H1 (cell line): ENCODE measurements at regions of chr1 and their contacts with region 1.

Region 1: GRCh38 chr1:84753516-84754385 is 63.5 kb upstream of the SSX2IP start:
- DNase-seq: peak; percentile 59 to 85
- H3K4me3 ChIP-seq: no peak overlapping the region
- H3K27ac ChIP-seq: no peak overlapping the region
- H3K4me1 ChIP-seq: peaks cover 0 to 12% (median 2%) of the 10 kb centered on the region in 4 experiments; a peak in 4 of 7 replicates
- H3K27me3 ChIP-seq: no peaks in the 10 kb centered on the region
- CTCF ChIP-seq: peak; percentile 95 to 96 (median 96)
- EP300 ChIP-seq: no peak
- POLR2A ChIP-seq: no peak
- RAD21 ChIP-seq: peak; percentile 99 to 100

Region 2: GRCh38 chr1:84603941-84604830 is 149.6 kb before region 1 on chr1:
- CTCF ChIA-PET with region 1: interaction called, 12 read pairs
- POLR2A ChIA-PET with region 1: no interaction called
- DNase-seq: peak; percentile 49 to 60
- H3K4me3 ChIP-seq: no peak overlapping the region
- H3K27ac ChIP-seq: no peak overlapping the region
- H3K4me1 ChIP-seq: no peaks in the 10 kb centered on the region
- H3K27me3 ChIP-seq: no peaks in the 10 kb centered on the region
- CTCF ChIP-seq: peak; percentile 60 to 91 (median 87)
- EP300 ChIP-seq: no peak
- POLR2A ChIP-seq: no peak
- RAD21 ChIP-seq: peak; percentile 94 to 97

Region 3: DNA sequence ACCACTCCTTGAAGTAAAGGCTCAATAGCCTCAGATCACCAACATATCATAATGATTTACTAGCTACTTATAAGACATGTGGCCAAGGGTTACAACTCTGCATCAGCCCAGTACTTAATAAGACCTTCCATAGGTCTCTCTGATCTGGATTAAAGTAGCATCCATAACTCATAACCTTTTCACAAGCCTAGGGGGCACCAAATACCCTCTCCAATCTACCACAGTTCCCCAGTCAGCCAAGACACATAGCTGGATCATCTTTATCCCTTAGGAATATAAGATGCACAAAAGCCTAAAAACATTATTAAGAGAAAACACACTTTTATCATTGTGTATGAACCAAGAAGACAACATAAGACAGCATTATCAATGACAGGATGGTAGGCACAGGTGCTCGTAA is 85.6 kb before region 1 on chr1:
- CTCF ChIA-PET with region 1: interaction called, 37 read pairs
- POLR2A ChIA-PET with region 1: no interaction called
- DNase-seq: no peak
- H3K4me3 ChIP-seq: no peak overlapping the region
- H3K27ac ChIP-seq: no peak overlapping the region
- H3K4me1 ChIP-seq: peaks cover 0 to 2% (median 0%) of the 10 kb centered on the region in 4 experiments; a peak in 1 of 7 replicates
- H3K27me3 ChIP-seq: peaks cover 0 to 1% (median 0%) of the 10 kb centered on the region in 4 experiments; a peak in 1 of 7 replicates
- CTCF ChIP-seq: peak in 2 of 3 experiments; percentile 44 to 47; a peak in 2 of 4 replicates
- EP300 ChIP-seq: no peak
- POLR2A ChIP-seq: no peak
- RAD21 ChIP-seq: peak; percentile 64 to 76

Region 4: DNA sequence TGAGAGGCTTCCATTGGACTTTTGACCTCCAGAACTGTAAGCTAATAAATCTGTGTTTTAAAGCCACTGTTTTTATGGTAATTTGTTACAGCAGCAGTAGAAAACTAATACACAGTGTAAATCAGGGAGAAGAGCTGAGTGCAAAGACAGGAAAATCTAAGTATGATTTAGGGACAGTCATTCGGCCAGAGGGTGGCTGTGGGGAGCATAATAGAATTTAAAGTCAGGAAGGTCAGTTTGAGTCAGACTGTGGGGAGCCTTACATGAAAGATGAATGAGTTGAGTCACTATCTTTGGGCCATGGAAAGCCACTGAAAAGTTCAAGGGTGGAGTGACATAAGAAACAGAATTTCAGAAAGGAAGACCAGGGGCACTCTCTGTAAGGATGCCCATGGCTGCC is 11.1 kb before region 1 on chr1:
- CTCF ChIA-PET with region 1: interaction called, 34 read pairs
- POLR2A ChIA-PET with region 1: interaction called, 3 read pairs
- DNase-seq: no peak
- H3K4me3 ChIP-seq: no peak overlapping the region
- H3K27ac ChIP-seq: no peak overlapping the region
- H3K4me1 ChIP-seq: peaks cover 0 to 14% (median 8%) of the 10 kb centered on the region in 4 experiments; a peak in 5 of 7 replicates
- H3K27me3 ChIP-seq: no peaks in the 10 kb centered on the region
- CTCF ChIP-seq: no peak
- EP300 ChIP-seq: no peak
- POLR2A ChIP-seq: no peak
- RAD21 ChIP-seq: no peak

Region 5: DNA sequence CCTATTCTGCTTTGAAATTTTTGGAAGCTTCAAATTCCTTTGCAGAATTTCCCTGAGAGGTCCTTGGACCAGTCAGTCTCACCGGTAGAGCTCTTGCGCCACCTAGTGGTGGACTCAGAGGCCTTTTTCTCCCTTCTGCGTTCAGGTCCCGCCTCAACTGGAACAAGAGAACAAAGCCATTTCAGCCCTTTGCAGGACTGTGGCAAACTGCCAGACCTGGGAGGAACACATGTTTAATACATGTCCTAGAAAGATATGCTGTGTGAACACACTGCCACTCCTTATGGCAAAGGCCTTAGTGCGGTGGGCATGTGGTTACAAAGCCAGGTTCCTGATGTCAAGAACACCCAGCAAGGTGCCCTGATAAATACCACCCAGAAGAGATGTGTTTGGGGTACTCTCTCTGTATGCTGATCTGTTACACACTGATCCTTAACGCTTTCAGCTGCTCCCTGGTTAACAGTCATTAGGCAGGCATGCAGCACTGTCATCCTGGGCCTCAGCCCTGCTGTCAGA is 18.7 kb after region 1 on chr1:
- CTCF ChIA-PET with region 1: interaction called, 164 read pairs
- POLR2A ChIA-PET with region 1: no interaction called
- DNase-seq: peak; percentile 63 to 94
- H3K4me3 ChIP-seq: no peak overlapping the region
- H3K27ac ChIP-seq: no peak overlapping the region
- H3K4me1 ChIP-seq: peaks cover 0 to 5% (median 3%) of the 10 kb centered on the region in 4 experiments; a peak in 5 of 7 replicates
- H3K27me3 ChIP-seq: no peaks in the 10 kb centered on the region
- CTCF ChIP-seq: peak; percentile 82 to 92 (median 87)
- EP300 ChIP-seq: no peak
- POLR2A ChIP-seq: no peak
- RAD21 ChIP-seq: peak; percentile 97 to 98